ENCODE measurements at regions of chr10 and their contacts with region 1.

Region 1: DNA sequence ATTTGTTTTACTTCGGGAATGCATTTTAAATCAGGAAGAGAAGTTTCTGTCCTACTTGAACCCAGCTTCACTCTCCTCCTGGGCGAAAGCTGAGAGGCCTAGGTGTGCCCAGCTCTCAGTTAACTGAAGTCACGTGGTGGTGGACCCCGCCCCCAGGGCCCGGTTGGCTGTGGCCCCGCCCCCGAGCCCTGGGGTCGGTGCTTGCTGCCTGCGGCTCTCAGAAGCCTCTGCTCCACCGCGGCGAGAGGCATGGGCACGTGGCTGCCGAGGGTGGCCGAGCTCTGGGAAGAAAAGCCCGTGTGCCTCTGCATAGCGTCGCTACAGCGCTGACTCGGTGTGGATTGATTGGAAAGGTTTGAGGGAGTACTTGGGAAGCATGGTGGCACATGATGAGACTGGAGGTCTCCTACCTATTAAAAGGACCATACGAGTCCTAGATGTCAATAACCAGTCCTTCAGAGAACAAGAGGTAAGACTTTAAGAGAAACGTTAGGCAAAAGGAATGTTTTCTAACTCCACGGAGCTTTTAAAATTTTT is 34.1 kb downstream of the NET1 start:
- DNase-seq: peak; percentile 87 to 96 (median 93)
- H3K4me3 ChIP-seq: peak overlapping the region in 2 of 4 donors; percentile 15 to 63
- H3K27ac ChIP-seq: peak overlapping the region in 4 of 5 donors; percentile 35 to 66 (median 58)
- H3K4me1 ChIP-seq: peaks cover 0 to 16% of the 10 kb centered on the region in 2 donors
- H3K27me3 ChIP-seq: no peaks in the 10 kb centered on the region
- CTCF ChIP-seq: no peak
- POLR2A ChIP-seq: peak in 1 of 2 donors; percentile 87

Region 2: GRCh38 chr10:5502903-5503835 is 56.7 kb after region 1 on chr10:
- intact Hi-C with region 1: no loop called
- DNase-seq: no peak
- H3K4me3 ChIP-seq: no peak overlapping the region
- H3K27ac ChIP-seq: no peak overlapping the region
- H3K4me1 ChIP-seq: no peaks in the 10 kb centered on the region
- H3K27me3 ChIP-seq: no peaks in the 10 kb centered on the region
- CTCF ChIP-seq: no peak
- POLR2A ChIP-seq: no peak

Region 3: GRCh38 chr10:5548527-5549223 is 102.2 kb after region 1 on chr10:
- intact Hi-C with region 1: no loop called
- DNase-seq: peak in 2 of 7 donors; percentile 21 to 62
- H3K4me3 ChIP-seq: no peak overlapping the region
- H3K27ac ChIP-seq: peak overlapping the region in 3 of 5 donors; percentile 34 to 74 (median 54)
- H3K4me1 ChIP-seq: no peaks in the 10 kb centered on the region
- H3K27me3 ChIP-seq: no peaks in the 10 kb centered on the region
- CTCF ChIP-seq: no peak
- POLR2A ChIP-seq: no peak

Region 4: GRCh38 chr10:5623081-5623748 is 176.8 kb after region 1 on chr10:
- intact Hi-C with region 1: loop called (anchors 5 kb)
- DNase-seq: peak; percentile 88 to 95 (median 93)
- H3K4me3 ChIP-seq: no peak overlapping the region
- H3K27ac ChIP-seq: peak overlapping the region in 1 of 5 donors; percentile 33
- H3K4me1 ChIP-seq: peaks cover 8 to 13% of the 10 kb centered on the region in 2 donors
- H3K27me3 ChIP-seq: no peaks in the 10 kb centered on the region
- CTCF ChIP-seq: peak; percentile 88 to 93 (median 90)
- POLR2A ChIP-seq: no peak

Measured in adrenal gland (tissue), 19 donors.